H1 (cell line): ENCODE measurements at regions of chr9 and their contacts with region 1.

Region 1: DNA sequence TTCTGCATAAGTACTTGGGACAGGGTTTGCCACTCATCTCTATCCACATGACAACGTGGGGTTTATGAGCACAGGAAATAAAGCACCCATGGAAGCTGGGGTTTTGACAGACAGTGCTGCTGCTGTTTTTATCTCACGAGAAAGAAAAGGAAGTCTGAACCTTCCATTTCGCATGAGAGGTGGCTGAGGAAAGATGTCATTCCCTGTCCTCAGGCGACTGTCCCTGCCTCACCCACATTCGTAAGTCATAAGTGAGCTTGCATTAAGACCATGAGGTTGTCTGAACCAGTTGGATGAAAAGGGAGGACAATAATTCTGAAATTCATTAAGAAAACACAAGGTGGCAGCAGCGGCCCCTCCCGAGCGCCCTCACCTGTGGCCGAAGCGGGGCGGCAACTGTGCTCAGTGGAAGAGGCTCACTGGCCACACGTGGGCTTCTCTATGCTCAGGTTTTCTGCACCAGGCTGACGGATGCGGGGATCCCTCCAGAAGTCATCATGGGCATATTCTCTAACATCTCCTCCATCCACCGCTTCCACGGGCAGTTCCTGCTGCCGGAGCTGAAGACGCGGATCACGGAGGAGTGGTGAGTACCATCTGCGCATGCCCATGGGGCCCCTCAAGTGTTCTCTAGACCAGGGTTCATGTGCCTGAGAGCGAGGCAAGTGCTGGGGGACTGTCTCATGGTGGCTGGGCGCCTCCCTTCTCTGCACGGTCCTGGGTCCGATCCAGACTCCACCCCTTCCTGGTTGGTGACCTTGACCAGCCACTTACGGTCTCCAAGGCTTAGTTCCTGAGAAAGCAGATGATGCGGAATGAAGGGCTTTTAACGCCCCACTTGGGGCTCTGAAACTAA is 54.7 kb upstream of the SUSD3 start:
- DNase-seq: peak in 1 of 2 experiments; percentile 82
- H3K4me3 ChIP-seq: no peak overlapping the region
- H3K27ac ChIP-seq: no peak overlapping the region
- H3K4me1 ChIP-seq: 0 out of 7 replicates have a peak, but pooled peaks cover 0 to 3% (median under 1%) of the 10 kb centered on the region in 4 experiments
- H3K27me3 ChIP-seq: no peaks in the 10 kb centered on the region
- CTCF ChIP-seq: peak; percentile 57 to 95 (median 78)
- EP300 ChIP-seq: no peak
- POLR2A ChIP-seq: no peak
- RAD21 ChIP-seq: peak; percentile 76 to 87

Region 2: GRCh38 chr9:92954049-92954861 is 49.5 kb before region 1 on chr9:
- CTCF ChIA-PET with region 1: interaction called, 18 read pairs
- POLR2A ChIA-PET with region 1: no interaction called
- DNase-seq: no peak
- H3K4me3 ChIP-seq: no peak overlapping the region
- H3K27ac ChIP-seq: no peak overlapping the region
- H3K4me1 ChIP-seq: no peaks in the 10 kb centered on the region
- H3K27me3 ChIP-seq: no peaks in the 10 kb centered on the region
- CTCF ChIP-seq: no peak
- EP300 ChIP-seq: no peak
- POLR2A ChIP-seq: no peak
- RAD21 ChIP-seq: no peak

Region 3: DNA sequence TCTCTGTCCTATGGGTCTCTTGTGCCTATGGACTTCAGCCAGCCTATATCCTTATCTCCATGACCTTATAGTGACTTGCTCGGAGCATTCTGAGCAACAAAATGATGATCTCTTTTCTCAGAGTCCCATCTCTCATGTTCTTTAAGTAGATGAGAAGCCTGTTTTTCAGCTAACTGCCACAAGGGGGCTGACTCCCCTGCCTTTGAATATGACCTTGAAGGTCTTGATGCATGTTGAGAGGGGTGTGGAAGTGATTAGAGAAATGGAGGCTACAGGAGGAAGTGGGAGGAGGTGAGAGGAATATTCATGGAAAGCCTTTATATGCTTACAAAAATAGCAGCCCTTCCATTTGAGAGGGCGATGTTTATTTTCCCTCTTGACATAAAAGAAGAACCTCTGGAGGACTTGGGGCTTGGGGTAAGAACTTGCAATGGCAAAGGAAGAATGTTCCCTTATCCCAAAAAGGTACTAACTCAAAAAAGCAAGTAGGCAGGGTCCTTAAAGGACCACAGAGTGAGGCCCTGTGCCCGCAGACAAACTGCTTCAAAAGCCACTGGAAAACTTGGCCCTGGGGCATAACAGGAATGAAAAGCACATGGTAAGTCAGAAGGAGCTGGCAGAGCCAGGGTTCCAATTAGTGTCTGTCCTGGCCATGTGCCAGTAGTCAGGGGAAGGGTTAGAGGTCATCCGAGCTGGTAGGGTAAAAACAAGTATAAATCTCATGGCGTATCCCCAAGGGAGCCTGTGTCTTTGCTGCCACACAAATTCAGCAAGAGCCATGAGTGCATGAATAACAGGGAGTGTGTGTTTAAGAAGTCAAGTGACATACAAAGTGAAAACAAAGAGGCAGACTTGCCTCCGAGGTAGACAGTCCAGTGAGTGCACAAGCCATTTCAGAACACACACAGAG is 17.3 kb before region 1 on chr9:
- CTCF ChIA-PET with region 1: interaction called, 39 read pairs
- POLR2A ChIA-PET with region 1: no interaction called
- DNase-seq: no peak
- H3K4me3 ChIP-seq: no peak overlapping the region
- H3K27ac ChIP-seq: no peak overlapping the region
- H3K4me1 ChIP-seq: peaks cover 0 to 8% (median 2%) of the 10 kb centered on the region in 4 experiments; a peak in 3 of 7 replicates
- H3K27me3 ChIP-seq: no peaks in the 10 kb centered on the region
- CTCF ChIP-seq: peak in 2 of 3 experiments; percentile 41 to 59; a peak in 3 of 4 replicates
- EP300 ChIP-seq: no peak
- POLR2A ChIP-seq: no peak
- RAD21 ChIP-seq: peak; percentile 29 to 57; a peak in 3 of 4 replicates

Region 4: GRCh38 chr9:93013856-93014582 is 10.2 kb after region 1 on chr9:
- CTCF ChIA-PET with region 1: interaction called, 45 read pairs
- POLR2A ChIA-PET with region 1: interaction called, 3 read pairs
- DNase-seq: peak in 1 of 2 experiments; percentile 53
- H3K4me3 ChIP-seq: no peak overlapping the region
- H3K27ac ChIP-seq: no peak overlapping the region
- H3K4me1 ChIP-seq: peaks cover 2 to 5% (median 4%) of the 10 kb centered on the region in 4 experiments; a peak in 6 of 7 replicates
- H3K27me3 ChIP-seq: no peaks in the 10 kb centered on the region
- CTCF ChIP-seq: no peak
- EP300 ChIP-seq: no peak
- POLR2A ChIP-seq: no peak
- RAD21 ChIP-seq: no peak

Region 5: GRCh38 chr9:93037476-93037971 is 33.7 kb after region 1 on chr9:
- CTCF ChIA-PET with region 1: interaction called, 12 read pairs
- POLR2A ChIA-PET with region 1: no interaction called
- DNase-seq: no peak
- H3K4me3 ChIP-seq: no peak overlapping the region
- H3K27ac ChIP-seq: no peak overlapping the region
- H3K4me1 ChIP-seq: peaks cover 0 to 9% (median under 1%) of the 10 kb centered on the region in 4 experiments; a peak in 3 of 7 replicates
- H3K27me3 ChIP-seq: no peaks in the 10 kb centered on the region
- CTCF ChIP-seq: no peak
- EP300 ChIP-seq: no peak
- POLR2A ChIP-seq: no peak
- RAD21 ChIP-seq: no peak

Region 6: DNA sequence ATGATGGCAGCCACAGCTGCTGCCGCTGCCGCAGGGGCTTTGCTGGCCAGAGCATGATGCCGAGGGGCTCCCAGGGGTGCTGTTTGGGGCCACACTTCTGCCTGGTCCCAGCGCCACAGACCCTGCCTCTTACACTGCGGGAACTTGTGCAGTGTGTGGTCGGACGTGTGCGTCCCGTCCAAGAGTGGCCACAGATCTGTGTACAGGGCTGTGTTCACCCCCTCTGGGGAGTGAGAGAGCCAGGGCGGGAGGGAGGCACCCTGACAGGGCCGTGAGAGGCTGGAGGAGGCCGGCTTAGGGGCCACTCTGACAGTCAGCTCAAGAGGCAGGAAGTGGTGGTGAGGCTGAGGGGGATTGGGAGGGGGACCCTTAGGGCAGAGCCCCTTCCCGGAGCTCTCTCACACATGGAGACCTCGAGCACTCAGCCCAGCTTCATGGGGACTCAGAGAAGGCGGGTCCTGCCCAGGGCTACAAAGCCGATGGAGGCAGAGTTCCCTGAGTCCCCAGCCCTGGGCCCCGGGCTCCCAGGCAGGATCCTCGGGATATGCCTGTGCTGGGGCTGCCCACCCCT is 79.1 kb after region 1 on chr9:
- CTCF ChIA-PET with region 1: interaction called, 13 read pairs
- POLR2A ChIA-PET with region 1: no interaction called
- DNase-seq: no peak
- H3K4me3 ChIP-seq: no peak overlapping the region
- H3K27ac ChIP-seq: no peak overlapping the region
- H3K4me1 ChIP-seq: no peaks in the 10 kb centered on the region; a peak in 1 of 7 replicates
- H3K27me3 ChIP-seq: no peaks in the 10 kb centered on the region
- CTCF ChIP-seq: no peak
- EP300 ChIP-seq: no peak
- POLR2A ChIP-seq: no peak
- RAD21 ChIP-seq: no peak